ENCODE measurements at regions of chr2 and their contacts with region 1.

Region 1: GRCh38 chr2:135149251-135149650 is 97.2 kb downstream of the RAB3GAP1 start:
- DNase-seq: no peak
- CTCF ChIP-seq: no peak

Region 2: DNA sequence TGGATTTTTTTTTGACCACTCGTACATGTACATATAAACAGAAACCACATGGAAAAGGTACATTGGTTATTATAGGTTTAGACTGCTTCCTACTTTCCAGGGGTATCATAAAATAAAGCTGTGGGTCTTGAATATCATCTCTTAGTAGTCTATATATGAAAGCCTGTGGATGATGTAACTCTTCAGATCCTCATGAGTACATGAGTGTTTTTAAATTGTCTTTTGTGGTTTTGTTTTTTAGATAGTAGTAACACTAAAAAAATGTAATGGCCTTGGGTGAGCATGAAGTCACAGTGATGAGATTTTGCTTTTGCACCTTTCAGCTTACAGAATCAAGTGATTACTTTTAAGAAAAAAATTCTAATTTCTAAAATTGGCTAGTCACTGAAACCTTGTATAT is 16.9 kb before region 1 on chr2:
- CTCF ChIA-PET with region 1: interaction called, 3 read pairs
- POLR2A ChIA-PET with region 1: interaction called, 10 read pairs
- DNase-seq: no peak
- CTCF ChIP-seq: no peak

Region 3: GRCh38 chr2:135168204-135168856 is 19.1 kb after region 1 on chr2:
- CTCF ChIA-PET with region 1: interaction called, 12 read pairs
- POLR2A ChIA-PET with region 1: no interaction called
- DNase-seq: no peak
- CTCF ChIP-seq: no peak

Region 4: GRCh38 chr2:135485441-135485840 is 336.2 kb after region 1 on chr2:
- CTCF ChIA-PET with region 1: no interaction called
- POLR2A ChIA-PET with region 1: no interaction called
- DNase-seq: no peak
- CTCF ChIP-seq: no peak

Measured in GM10248 (cell line).